Testis (tissue), 5 donors: ENCODE measurements at regions of chr10 and their contacts with region 1.

Region 1: GRCh38 chr10:97355571-97355975 is 21.0 kb upstream of the FRAT2 start:
- DNase-seq: peak; percentile 41
- H3K4me3 ChIP-seq: no peak overlapping the region
- H3K27ac ChIP-seq: no peak overlapping the region
- H3K4me1 ChIP-seq: no peaks in the 10 kb centered on the region
- H3K27me3 ChIP-seq: no peaks in the 10 kb centered on the region
- CTCF ChIP-seq: peak in 2 of 3 experiments; percentile 27 to 48
- POLR2A ChIP-seq: no peak

Region 2: GRCh38 chr10:96840841-96841518 is 514.6 kb before region 1 on chr10:
- intact Hi-C with region 1: no loop called
- DNase-seq: no peak
- H3K4me3 ChIP-seq: no peak overlapping the region
- H3K27ac ChIP-seq: no peak overlapping the region
- H3K4me1 ChIP-seq: peaks cover 23% of the 10 kb centered on the region
- H3K27me3 ChIP-seq: no peaks in the 10 kb centered on the region
- CTCF ChIP-seq: no peak
- POLR2A ChIP-seq: no peak

Region 3: GRCh38 chr10:97157578-97158095 is 197.9 kb before region 1 on chr10:
- intact Hi-C with region 1: no loop called
- DNase-seq: no peak
- H3K4me3 ChIP-seq: no peak overlapping the region
- H3K27ac ChIP-seq: no peak overlapping the region
- H3K4me1 ChIP-seq: no peaks in the 10 kb centered on the region
- H3K27me3 ChIP-seq: no peaks in the 10 kb centered on the region
- CTCF ChIP-seq: no peak
- POLR2A ChIP-seq: no peak

Region 4: GRCh38 chr10:97278491-97278989 is 77.0 kb before region 1 on chr10:
- intact Hi-C with region 1: loop called (anchors 10 kb)
- DNase-seq: no peak
- H3K4me3 ChIP-seq: no peak overlapping the region
- H3K27ac ChIP-seq: peak overlapping the region; percentile 60 to 79
- H3K4me1 ChIP-seq: peaks cover 28% of the 10 kb centered on the region
- H3K27me3 ChIP-seq: no peaks in the 10 kb centered on the region
- CTCF ChIP-seq: peak; percentile 50 to 64 (median 52)
- POLR2A ChIP-seq: no peak

Region 5: GRCh38 chr10:97553575-97554031 is 198.0 kb after region 1 on chr10:
- intact Hi-C with region 1: no loop called
- DNase-seq: peak; percentile 77
- H3K4me3 ChIP-seq: no peak overlapping the region
- H3K27ac ChIP-seq: no peak overlapping the region
- H3K4me1 ChIP-seq: peaks cover 26% of the 10 kb centered on the region
- H3K27me3 ChIP-seq: no peaks in the 10 kb centered on the region
- CTCF ChIP-seq: peak; percentile 42 to 70 (median 51)
- POLR2A ChIP-seq: no peak